Dorsolateral prefrontal cortex (tissue), 120 donors: ENCODE measurements at regions of chr3 and their contacts with region 1.

Region 1: DNA sequence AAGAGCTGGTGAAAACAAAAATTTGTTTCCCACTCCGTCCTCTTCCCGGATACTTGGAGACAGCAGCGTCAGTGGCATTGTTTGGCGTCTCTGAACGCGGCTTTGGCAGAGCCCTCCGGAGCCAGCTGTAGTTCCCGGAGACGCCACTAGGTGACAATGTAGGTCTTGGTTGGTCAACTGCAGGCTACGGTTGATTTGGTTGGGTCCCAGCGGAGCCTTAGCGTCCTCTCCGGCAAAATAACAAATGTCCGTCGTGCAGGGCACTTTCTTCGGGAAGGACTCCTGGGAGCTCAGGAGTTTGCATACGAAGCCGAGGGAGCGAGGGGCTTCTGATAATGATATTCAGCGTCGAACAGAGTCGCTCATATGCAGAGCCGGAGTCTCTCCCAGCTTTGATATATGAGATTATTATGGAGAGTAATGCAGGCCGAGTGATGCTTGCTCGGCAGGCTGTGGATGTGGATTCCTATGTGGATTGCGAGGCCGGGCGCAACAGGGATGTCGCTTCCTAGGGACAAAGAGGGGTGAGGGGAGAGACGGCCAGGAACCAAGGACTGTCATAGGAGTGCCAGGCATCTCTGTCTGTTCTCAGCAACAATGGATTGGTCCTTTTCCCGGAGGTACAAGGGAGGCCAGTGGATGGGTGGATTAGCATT is 74.8 kb downstream of the IL20RB start:
- DNase-seq: peak; percentile 82 to 92 (median 90)
- H3K4me3 ChIP-seq: peak overlapping the region; percentile 8 to 68 (median 50)
- H3K27ac ChIP-seq: peak overlapping the region in 2 of 59 donors; percentile 12 to 19
- H3K27me3 ChIP-seq: peaks cover 0 to 4% (median 0%) of the 10 kb centered on the region in 45 donors
- CTCF ChIP-seq: peak; percentile 76 to 99 (median 96)

Region 2: DNA sequence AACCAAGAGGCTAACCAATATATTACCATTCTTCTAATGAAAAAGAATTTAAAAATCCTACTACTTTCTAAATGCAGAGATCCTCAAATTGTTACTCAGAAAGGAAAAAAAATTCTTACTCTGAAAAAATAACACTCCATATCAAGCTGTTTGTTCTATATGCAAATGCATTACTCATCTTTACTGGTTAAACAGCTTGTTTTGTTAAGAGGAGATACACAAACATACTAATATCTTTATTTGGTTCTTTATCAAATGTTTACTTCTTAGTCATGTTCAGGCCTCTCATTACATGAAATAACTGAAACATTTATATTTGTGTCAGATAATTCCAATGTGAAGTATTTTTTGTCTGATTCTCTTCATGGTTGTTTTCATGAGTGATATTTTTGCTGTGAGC is 635.7 kb before region 1 on chr3:
- intact Hi-C with region 1: loop called in 1 of 2 experiments (anchors 10 kb)
- DNase-seq: no peak
- H3K4me3 ChIP-seq: no peak overlapping the region
- H3K27ac ChIP-seq: peak overlapping the region in 7 of 59 donors; percentile 0 to 17 (median 9)
- H3K27me3 ChIP-seq: no peaks in the 10 kb centered on the region
- CTCF ChIP-seq: no peak

Region 3: DNA sequence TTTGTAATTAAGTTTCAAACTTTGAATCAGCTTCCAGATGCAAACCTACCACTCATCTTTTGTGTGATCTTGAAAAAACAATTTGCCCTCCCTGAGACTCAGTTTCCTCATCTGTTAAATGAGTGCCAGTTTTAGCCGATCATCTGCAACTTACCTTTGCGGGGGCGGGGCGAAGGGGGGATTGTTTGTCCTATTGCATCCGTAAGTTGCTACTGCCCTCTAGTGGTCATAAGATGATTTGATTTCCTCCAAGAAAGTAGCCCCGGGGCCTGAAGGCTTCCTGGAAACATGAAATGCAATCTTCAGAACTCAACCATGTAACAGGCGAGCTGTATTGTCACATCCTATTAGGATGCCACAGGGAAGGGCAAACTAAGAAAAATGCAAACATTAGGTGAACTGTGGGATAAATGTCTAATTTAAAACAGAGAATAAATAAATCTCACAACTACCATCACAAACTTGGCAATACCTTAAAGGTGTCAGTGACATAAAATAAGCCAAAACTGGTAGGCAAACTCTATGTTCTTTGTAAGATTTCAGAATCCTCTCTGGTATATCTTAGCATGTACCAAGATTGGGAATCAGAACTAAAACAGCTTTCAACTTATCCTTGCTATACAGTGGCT is 913.9 kb after region 1 on chr3:
- intact Hi-C with region 1: loop called in 1 of 2 experiments (anchors 10 kb)
- DNase-seq: peak in 4 of 10 donors; percentile 25 to 34 (median 27)
- H3K4me3 ChIP-seq: no peak overlapping the region
- H3K27ac ChIP-seq: no peak overlapping the region
- H3K27me3 ChIP-seq: peaks cover 0 to 10% (median 0%) of the 10 kb centered on the region in 45 donors
- CTCF ChIP-seq: peak; percentile 58 to 86 (median 72)